Activated naive CD4-positive, alpha-beta T cell treated with anti-CD3 and anti-CD28 coated beads for 36 hours (primary cell): ENCODE measurements at regions of chr17 and their contacts with region 1.

Region 1: DNA sequence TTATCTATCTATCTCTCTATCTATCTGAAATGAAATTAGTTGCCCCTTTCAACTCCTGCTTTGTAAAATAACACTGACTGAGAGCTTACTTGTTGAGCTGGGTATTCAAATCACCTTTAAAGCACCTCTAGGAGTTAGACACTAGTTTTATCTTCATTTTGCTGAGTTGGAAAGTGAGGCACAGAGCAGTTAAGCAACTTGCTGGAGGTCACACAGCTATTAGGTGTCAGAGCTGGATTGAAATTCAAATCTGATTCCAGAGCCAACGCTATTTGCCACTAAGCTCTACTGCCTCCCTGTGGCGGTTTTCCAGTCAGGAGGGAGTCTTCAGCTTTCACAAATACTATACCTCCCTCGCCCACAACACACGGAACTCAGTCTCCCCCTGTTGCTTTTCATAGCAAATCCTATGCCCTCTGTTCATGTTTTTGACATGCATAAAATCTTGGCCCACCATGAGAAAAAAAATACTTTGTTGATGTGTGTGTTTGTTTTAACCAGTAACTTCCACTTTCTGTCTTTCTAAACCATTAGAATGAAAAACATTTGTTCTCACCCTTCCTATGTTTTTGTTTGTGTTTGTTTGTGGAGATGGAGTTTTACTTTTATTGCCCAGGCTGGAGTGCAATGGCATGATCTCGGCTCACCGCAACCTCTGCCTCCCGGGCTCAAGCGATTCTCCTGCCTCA is 74.8 kb upstream of the SMURF2 start:
- DNase-seq: peak; percentile 80
- H3K4me3 Mint-ChIP-seq: no peak overlapping the region
- H3K27ac Mint-ChIP-seq: no peak overlapping the region
- H3K4me1 Mint-ChIP-seq: peaks cover 13% of the 10 kb centered on the region
- H3K27me3 Mint-ChIP-seq: no peaks in the 10 kb centered on the region

Region 2: GRCh38 chr17:64496786-64497564 is 240.0 kb before region 1 on chr17 and contains the start of gene POLG2:
- CTCF ChIA-PET with region 1: no interaction called
- intact Hi-C with region 1: loop called (anchors 5 kb)
- DNase-seq: peak; percentile 96
- H3K4me3 Mint-ChIP-seq: peak within 1 kb of the TSS; percentile 100
- H3K27ac Mint-ChIP-seq: peak within 1 kb of the TSS; percentile 97
- H3K4me1 Mint-ChIP-seq: peaks cover 74% of the 10 kb centered on the region
- H3K27me3 Mint-ChIP-seq: no peaks in the 10 kb centered on the region
- total RNA-seq, gene POLG2: 23.4 to 26.9 TPM

Region 3: GRCh38 chr17:64572638-64573154 is 164.3 kb before region 1 on chr17:
- CTCF ChIA-PET with region 1: no interaction called
- intact Hi-C with region 1: no loop called
- DNase-seq: peak; percentile 7
- H3K4me3 Mint-ChIP-seq: no peak overlapping the region
- H3K27ac Mint-ChIP-seq: peak overlapping the region; percentile 70
- H3K4me1 Mint-ChIP-seq: peaks cover 14% of the 10 kb centered on the region
- H3K27me3 Mint-ChIP-seq: no peaks in the 10 kb centered on the region

Region 4: GRCh38 chr17:64653325-64653984 is 83.5 kb before region 1 on chr17:
- CTCF ChIA-PET with region 1: interaction called, 10 read pairs
- intact Hi-C with region 1: loop called (anchors 5 kb)
- DNase-seq: no peak
- H3K4me3 Mint-ChIP-seq: no peak overlapping the region
- H3K27ac Mint-ChIP-seq: peak overlapping the region; percentile 50
- H3K4me1 Mint-ChIP-seq: peaks cover 45% of the 10 kb centered on the region
- H3K27me3 Mint-ChIP-seq: no peaks in the 10 kb centered on the region

Region 5: DNA sequence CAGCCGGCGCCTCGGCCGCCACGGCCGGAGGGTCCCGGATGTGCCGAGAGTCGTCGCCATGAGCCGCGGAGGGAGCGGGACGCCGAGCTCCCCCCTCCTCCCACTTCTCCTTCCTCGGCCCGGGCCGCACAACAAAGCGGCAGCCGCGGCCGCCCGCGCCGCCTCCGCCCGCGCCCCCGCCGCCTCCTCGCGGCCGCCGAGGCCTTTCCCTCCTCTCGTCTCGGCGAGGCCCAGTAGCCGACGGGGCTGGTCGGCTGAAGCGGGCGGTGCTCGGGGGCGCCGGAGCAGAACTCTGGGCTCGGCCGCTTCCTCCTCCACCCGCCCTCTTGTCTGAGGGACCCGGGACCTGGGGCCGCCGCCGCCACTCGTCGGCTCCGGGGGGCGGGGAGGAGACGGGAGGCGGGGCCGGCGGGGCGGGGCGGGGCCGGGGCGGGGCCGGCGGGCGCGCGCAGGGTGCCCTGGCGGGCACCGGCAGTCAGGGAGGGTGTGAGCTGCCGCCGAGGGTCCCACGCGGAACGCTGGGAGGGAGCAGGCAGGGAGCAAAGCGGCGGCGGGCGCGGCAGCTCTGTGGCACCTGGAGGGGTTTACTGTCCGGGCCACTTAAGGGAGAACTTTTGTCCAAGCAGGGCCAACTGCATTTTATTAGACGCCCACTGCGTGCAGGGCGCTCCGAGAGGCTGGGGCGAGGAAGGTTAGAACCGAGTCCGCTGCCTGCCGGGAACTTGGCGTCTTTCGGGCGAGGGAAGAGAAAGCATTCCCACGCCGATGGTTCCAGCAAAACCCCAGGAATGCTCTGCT is 74.8 kb before region 1 on chr17 and contains the start of gene SMURF2:
- CTCF ChIA-PET with region 1: no interaction called
- intact Hi-C with region 1: loop called (anchors 5 kb)
- DNase-seq: peak; percentile 73
- H3K4me3 Mint-ChIP-seq: peak within 1 kb of the TSS; percentile 97
- H3K27ac Mint-ChIP-seq: peak within 1 kb of the TSS; percentile 91
- H3K4me1 Mint-ChIP-seq: peaks cover 23% of the 10 kb centered on the region
- H3K27me3 Mint-ChIP-seq: no peaks in the 10 kb centered on the region
- total RNA-seq, gene SMURF2: 9.6 to 10.7 TPM